CD4-positive, alpha-beta T cell (primary cell): ENCODE measurements at regions of chr14 and their contacts with region 1.

Region 1: DNA sequence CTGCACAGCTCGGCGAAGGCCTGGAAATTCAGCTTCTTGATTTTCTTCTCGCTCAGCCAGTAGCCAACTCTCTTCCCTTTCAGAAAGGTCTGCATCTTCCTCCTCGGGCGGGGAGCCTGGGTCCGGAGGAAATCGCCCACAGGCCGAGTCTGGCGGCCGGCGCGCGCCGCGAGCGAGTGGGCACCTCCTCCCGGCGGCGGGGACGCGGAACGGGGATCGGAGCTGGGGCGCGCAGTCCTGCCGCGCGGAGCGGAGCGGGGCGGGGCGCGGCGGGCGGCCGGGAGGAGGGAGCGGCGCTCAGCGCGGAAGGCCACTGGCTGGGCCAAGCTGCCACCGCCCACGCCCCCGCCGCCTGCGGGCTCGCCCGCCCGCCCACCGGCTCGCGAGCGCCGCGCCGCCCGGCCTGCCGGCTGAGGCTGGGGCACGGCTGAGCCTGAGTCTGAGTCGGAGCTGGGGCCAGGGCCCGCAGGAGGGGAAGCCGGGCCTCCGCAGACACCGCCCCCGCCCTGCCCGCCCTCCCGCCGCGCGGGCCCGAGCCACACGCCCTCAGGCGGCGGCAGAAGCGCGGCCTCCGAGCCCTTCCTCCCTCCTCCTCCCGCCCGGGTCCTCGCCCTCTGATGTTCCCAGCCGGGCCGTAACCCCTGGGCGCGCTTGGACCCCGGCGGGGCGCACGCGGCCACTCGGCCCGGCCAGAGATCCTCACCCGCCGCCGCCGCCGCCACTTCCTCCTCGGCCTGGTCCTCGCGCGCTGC is 480 bp downstream of the ITPK1 start:
- DNase-seq: peak; percentile 63 to 94 (median 83)
- ATAC-seq: peak; percentile 75
- H3K4me3 ChIP-seq: peak overlapping the region; percentile 59
- H3K4me3 Mint-ChIP-seq: peak overlapping the region; percentile 88
- H3K27ac ChIP-seq: peak overlapping the region in 1 of 2 donors; percentile 46
- H3K27ac Mint-ChIP-seq: peak overlapping the region; percentile 73
- H3K4me1 ChIP-seq: peaks cover 37% of the 10 kb centered on the region
- H3K4me1 Mint-ChIP-seq: peaks cover 30% of the 10 kb centered on the region
- H3K27me3 ChIP-seq: no peaks in the 10 kb centered on the region
- H3K27me3 Mint-ChIP-seq: no peaks in the 10 kb centered on the region
- CTCF ChIP-seq: no peak

Region 2: DNA sequence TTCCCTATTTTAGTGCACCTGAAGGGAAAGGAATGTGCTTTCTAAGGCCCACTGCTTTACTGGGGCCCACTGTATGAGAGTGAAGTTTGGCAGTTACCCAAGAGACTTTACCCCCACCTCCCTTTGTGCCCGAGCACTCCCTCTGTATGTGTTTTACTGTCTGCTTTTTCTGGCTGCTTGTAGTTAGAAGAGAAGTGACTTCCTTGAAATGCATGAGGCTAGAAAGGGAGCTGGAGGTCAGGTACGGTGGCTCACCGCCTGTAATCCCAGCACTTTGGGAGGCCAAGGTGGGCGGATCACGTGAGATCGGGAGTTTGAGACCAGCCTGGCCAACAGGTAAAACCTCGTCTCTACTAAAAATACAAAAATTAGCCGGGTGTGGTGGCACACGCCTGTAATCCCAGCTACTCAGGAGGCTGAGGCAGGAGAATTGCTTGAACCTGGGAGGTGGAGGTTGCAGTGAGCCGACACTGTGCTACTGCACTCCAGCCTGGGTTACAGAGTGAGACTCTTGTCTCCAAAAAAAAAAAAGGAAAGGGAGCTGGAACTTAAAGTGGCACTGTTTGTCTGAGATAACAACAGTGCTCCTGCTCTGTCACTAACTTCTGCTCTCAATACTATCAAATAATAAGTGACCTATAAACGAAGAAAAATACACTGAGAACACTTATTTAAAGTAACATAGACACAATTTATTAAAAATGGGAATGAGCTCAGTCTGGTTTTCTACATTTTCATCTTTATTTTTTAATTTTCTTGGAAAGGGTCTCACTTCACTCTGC is 1081.1 kb before region 1 on chr14:
- CTCF ChIA-PET with region 1: no interaction called
- POLR2A ChIA-PET with region 1: no interaction called
- intact Hi-C with region 1: loop called in 1 of 2 experiments (anchors 5 kb)
- DNase-seq: no peak
- ATAC-seq: no peak
- H3K4me3 ChIP-seq: no peak overlapping the region
- H3K4me3 Mint-ChIP-seq: no peak overlapping the region
- H3K27ac ChIP-seq: no peak overlapping the region
- H3K27ac Mint-ChIP-seq: peak overlapping the region; percentile 65
- H3K4me1 ChIP-seq: peaks cover 23% of the 10 kb centered on the region
- H3K4me1 Mint-ChIP-seq: peaks cover 44% of the 10 kb centered on the region
- H3K27me3 ChIP-seq: no peaks in the 10 kb centered on the region
- H3K27me3 Mint-ChIP-seq: no peaks in the 10 kb centered on the region
- CTCF ChIP-seq: no peak

Region 3: DNA sequence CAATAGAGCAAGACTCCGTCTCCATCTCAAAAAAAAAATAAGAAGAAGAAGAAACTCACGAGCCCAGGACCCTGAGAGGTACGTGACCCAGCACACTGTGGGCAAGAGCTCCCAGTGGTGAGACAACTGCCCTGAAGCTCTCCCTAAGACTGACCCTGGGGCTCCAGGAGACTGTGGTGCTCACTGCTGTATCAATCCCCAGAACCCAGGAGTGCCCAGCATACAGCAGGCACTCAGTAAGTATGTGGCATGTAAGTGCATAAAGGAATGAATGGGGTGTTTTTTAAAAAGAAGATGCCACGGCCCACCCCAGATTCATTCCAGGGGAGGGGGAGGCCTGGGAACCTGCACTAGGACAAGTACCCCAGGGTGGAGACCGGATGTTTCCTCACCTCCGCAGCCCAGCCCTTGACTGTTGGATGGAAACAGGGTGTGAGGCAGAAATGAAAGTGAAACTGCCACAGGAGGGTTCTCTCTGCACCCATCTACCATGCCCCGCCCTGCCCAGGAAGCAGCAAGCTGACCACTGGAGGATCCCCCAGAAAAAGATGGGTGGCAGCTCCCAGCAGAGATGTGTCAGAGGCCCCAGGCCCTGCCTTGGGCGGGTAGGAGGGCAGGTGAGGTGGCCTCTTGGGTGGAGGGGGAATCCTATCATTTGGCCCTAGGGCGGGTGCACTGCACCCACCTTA is 11.7 kb before region 1 on chr14:
- CTCF ChIA-PET with region 1: interaction called, 17 read pairs
- POLR2A ChIA-PET with region 1: interaction called, 19 read pairs
- intact Hi-C with region 1: no loop called
- DNase-seq: peak; percentile 26 to 92 (median 56)
- ATAC-seq: peak; percentile 93
- H3K4me3 ChIP-seq: peak overlapping the region; percentile 52
- H3K4me3 Mint-ChIP-seq: peak overlapping the region; percentile 87
- H3K27ac ChIP-seq: peak overlapping the region; percentile 24 to 70
- H3K27ac Mint-ChIP-seq: peak overlapping the region; percentile 94
- H3K4me1 ChIP-seq: peaks cover 40% of the 10 kb centered on the region
- H3K4me1 Mint-ChIP-seq: peaks cover 21% of the 10 kb centered on the region
- H3K27me3 ChIP-seq: no peaks in the 10 kb centered on the region
- H3K27me3 Mint-ChIP-seq: no peaks in the 10 kb centered on the region
- CTCF ChIP-seq: no peak

Region 4: DNA sequence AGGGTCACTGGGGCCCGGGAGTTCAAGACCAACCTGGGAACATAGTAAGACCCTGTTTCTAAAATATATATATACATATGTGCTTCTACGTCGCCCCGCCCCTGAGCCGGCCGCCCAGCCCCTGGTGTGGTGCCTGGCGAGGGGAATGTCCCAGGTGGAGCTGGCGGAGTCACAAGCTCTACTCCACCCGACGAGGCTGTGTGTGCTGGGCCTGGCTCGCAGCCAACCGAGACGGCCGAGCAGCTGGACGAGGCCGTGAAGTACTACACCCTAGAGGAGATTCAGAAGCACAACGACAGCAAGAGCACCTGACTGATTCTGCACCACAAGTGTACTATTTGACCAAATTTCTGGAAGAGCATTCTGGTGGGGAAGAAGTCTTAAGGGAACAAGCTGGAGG is 22.6 kb after region 1 on chr14:
- CTCF ChIA-PET with region 1: interaction called, 63 read pairs
- POLR2A ChIA-PET with region 1: interaction called, 23 read pairs
- intact Hi-C with region 1: loop called (anchors 1 kb)
- DNase-seq: no peak
- ATAC-seq: no peak
- H3K4me3 ChIP-seq: no peak overlapping the region
- H3K4me3 Mint-ChIP-seq: no peak overlapping the region
- H3K27ac ChIP-seq: no peak overlapping the region
- H3K27ac Mint-ChIP-seq: no peak overlapping the region
- H3K4me1 ChIP-seq: no peaks in the 10 kb centered on the region
- H3K4me1 Mint-ChIP-seq: peaks cover 6% of the 10 kb centered on the region
- H3K27me3 ChIP-seq: no peaks in the 10 kb centered on the region
- H3K27me3 Mint-ChIP-seq: no peaks in the 10 kb centered on the region
- CTCF ChIP-seq: no peak

Region 5: GRCh38 chr14:93206793-93207467 is 91.7 kb after region 1 on chr14 and contains the starts of genes GON7 and UBR7:
- CTCF ChIA-PET with region 1: interaction called, 4 read pairs
- POLR2A ChIA-PET with region 1: interaction called, 9 read pairs
- intact Hi-C with region 1: loop called in 1 of 2 experiments (anchors 1 kb)
- DNase-seq: peak; percentile 68 to 95 (median 82)
- ATAC-seq: peak; percentile 97
- H3K4me3 ChIP-seq: peak within 1 kb of the TSS; percentile 93
- H3K4me3 Mint-ChIP-seq: peak within 1 kb of the TSS; percentile 97
- H3K27ac ChIP-seq: peak within 1 kb of the TSS; percentile 56 to 75
- H3K27ac Mint-ChIP-seq: peak within 1 kb of the TSS; percentile 95
- H3K4me1 ChIP-seq: peaks cover 32% of the 10 kb centered on the region
- H3K4me1 Mint-ChIP-seq: peaks cover 52% of the 10 kb centered on the region
- H3K27me3 ChIP-seq: no peaks in the 10 kb centered on the region
- H3K27me3 Mint-ChIP-seq: no peaks in the 10 kb centered on the region
- CTCF ChIP-seq: peak; percentile 21
- total RNA-seq, gene GON7: 2.3 to 2.4 TPM
- total RNA-seq, gene UBR7: 6.8 to 7.4 TPM

Region 6: DNA sequence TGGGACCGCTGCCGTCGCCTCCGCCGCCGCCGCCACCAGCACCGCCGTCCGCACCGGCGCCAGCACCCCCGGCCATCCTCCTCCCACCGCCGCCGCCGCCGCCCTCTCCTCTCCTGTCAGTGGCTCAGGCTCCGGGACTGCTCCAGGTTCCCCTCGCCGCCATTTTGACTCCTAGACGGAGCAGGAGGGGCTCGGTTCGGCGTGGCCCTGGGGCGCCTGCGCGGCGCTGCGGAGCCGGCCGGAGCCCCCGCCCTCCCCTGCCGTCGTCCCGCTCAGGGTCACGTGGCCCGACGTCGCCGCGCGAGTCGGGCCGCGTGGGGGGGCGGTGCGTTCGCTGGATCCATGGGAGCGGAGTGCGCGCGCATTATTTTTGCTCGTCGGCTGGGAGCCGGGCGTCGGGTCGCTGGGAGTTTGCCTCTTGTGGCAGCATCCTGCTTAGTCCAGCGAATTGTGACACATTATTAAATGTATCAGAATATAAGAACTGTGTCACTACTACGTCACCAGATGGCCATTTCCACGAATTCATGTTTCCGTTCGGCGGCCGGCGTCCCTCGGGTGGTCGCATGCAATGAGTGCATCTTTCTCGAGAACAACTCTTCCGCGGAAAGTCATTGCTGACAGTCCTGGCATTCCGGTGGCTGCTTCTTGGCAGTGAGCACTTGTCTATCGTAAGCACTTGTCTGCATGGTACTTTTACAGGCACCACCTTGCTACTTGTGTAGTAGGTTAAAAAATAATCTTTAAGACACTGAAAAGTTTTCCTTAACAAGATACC is 217.8 kb after region 1 on chr14 and contains the start of gene BTBD7:
- CTCF ChIA-PET with region 1: interaction called, 4 read pairs
- POLR2A ChIA-PET with region 1: no interaction called
- intact Hi-C with region 1: loop called (anchors 1 to 5 kb)
- DNase-seq: peak; percentile 88 to 99 (median 92)
- ATAC-seq: peak; percentile 94
- H3K4me3 ChIP-seq: peak within 1 kb of the TSS; percentile 80
- H3K4me3 Mint-ChIP-seq: peak within 1 kb of the TSS; percentile 97
- H3K27ac ChIP-seq: peak within 1 kb of the TSS; percentile 52 to 73
- H3K27ac Mint-ChIP-seq: peak within 1 kb of the TSS; percentile 92
- H3K4me1 ChIP-seq: peaks cover 20% of the 10 kb centered on the region
- H3K4me1 Mint-ChIP-seq: peaks cover 58% of the 10 kb centered on the region
- H3K27me3 ChIP-seq: no peaks in the 10 kb centered on the region
- H3K27me3 Mint-ChIP-seq: no peaks in the 10 kb centered on the region
- CTCF ChIP-seq: no peak
- total RNA-seq, gene BTBD7: 12.5 to 12.6 TPM

Region 7: GRCh38 chr14:93493054-93493453 is 377.8 kb after region 1 on chr14:
- CTCF ChIA-PET with region 1: no interaction called
- POLR2A ChIA-PET with region 1: no interaction called
- intact Hi-C with region 1: no loop called
- DNase-seq: peak in 2 of 14 experiments; percentile 9 to 19
- ATAC-seq: no peak
- H3K4me3 ChIP-seq: no peak overlapping the region
- H3K4me3 Mint-ChIP-seq: no peak overlapping the region
- H3K27ac ChIP-seq: no peak overlapping the region
- H3K27ac Mint-ChIP-seq: no peak overlapping the region
- H3K4me1 ChIP-seq: no peaks in the 10 kb centered on the region
- H3K4me1 Mint-ChIP-seq: no peaks in the 10 kb centered on the region
- H3K27me3 ChIP-seq: no peaks in the 10 kb centered on the region
- H3K27me3 Mint-ChIP-seq: peaks cover 6% of the 10 kb centered on the region
- CTCF ChIP-seq: no peak

Region 8: DNA sequence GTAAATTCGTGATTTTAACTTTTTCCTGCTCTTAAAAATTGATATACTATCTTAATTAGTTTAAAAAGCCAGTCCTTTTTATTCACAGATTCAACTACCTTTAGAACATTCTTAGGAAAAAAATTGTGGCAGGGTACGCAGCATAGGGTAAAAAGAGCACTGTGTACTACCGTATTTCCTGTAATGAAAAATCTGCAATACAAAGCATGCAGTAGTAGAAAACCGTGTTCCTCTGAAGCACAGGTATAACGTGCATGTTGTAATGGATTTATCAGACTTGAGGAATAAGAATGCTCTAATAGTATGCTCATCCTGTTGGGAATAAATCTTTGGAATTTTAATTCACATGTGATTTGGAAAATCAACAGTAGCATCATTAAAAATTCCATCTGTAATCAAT is 456.0 kb after region 1 on chr14:
- CTCF ChIA-PET with region 1: no interaction called
- POLR2A ChIA-PET with region 1: no interaction called
- intact Hi-C with region 1: no loop called
- DNase-seq: no peak
- ATAC-seq: no peak
- H3K4me3 ChIP-seq: no peak overlapping the region
- H3K4me3 Mint-ChIP-seq: no peak overlapping the region
- H3K27ac ChIP-seq: no peak overlapping the region
- H3K27ac Mint-ChIP-seq: no peak overlapping the region
- H3K4me1 ChIP-seq: no peaks in the 10 kb centered on the region
- H3K4me1 Mint-ChIP-seq: no peaks in the 10 kb centered on the region
- H3K27me3 ChIP-seq: peaks cover 0 to 6% of the 10 kb centered on the region in 2 experiments
- H3K27me3 Mint-ChIP-seq: peaks cover 19% of the 10 kb centered on the region
- CTCF ChIP-seq: no peak

Region 9: GRCh38 chr14:94173885-94174603 is 1058.8 kb after region 1 on chr14 and contains the start of gene PPP4R4:
- CTCF ChIA-PET with region 1: no interaction called
- POLR2A ChIA-PET with region 1: no interaction called
- intact Hi-C with region 1: loop called in 1 of 2 experiments (anchors 10 kb)
- DNase-seq: peak; percentile 75 to 95 (median 88)
- ATAC-seq: peak; percentile 90
- H3K4me3 ChIP-seq: peak within 1 kb of the TSS; percentile 79
- H3K4me3 Mint-ChIP-seq: peak within 1 kb of the TSS; percentile 88
- H3K27ac ChIP-seq: no peak within 1 kb of the TSS
- H3K27ac Mint-ChIP-seq: peak within 1 kb of the TSS; percentile 11
- H3K4me1 ChIP-seq: peaks cover 23% of the 10 kb centered on the region
- H3K4me1 Mint-ChIP-seq: peaks cover 30% of the 10 kb centered on the region
- H3K27me3 ChIP-seq: peaks cover 4 to 7% of the 10 kb centered on the region in 2 experiments
- H3K27me3 Mint-ChIP-seq: peaks cover 7% of the 10 kb centered on the region
- CTCF ChIP-seq: no peak
- total RNA-seq, gene PPP4R4: 3.5 to 4.3 TPM